Activated CD4-positive, alpha-beta memory T cell treated with anti-CD3 and anti-CD28 coated beads for 36 hours (primary cell): ENCODE measurements at regions of chr11 and their contacts with region 1.

Region 1: GRCh38 chr11:114134870-114135269 is 75.4 kb downstream of the ZBTB16 start:
- DNase-seq: no peak
- H3K4me3 Mint-ChIP-seq: no peak overlapping the region
- H3K27ac Mint-ChIP-seq: no peak overlapping the region
- H3K4me1 Mint-ChIP-seq: peaks cover 33% of the 10 kb centered on the region
- H3K27me3 Mint-ChIP-seq: no peaks in the 10 kb centered on the region

Region 2: DNA sequence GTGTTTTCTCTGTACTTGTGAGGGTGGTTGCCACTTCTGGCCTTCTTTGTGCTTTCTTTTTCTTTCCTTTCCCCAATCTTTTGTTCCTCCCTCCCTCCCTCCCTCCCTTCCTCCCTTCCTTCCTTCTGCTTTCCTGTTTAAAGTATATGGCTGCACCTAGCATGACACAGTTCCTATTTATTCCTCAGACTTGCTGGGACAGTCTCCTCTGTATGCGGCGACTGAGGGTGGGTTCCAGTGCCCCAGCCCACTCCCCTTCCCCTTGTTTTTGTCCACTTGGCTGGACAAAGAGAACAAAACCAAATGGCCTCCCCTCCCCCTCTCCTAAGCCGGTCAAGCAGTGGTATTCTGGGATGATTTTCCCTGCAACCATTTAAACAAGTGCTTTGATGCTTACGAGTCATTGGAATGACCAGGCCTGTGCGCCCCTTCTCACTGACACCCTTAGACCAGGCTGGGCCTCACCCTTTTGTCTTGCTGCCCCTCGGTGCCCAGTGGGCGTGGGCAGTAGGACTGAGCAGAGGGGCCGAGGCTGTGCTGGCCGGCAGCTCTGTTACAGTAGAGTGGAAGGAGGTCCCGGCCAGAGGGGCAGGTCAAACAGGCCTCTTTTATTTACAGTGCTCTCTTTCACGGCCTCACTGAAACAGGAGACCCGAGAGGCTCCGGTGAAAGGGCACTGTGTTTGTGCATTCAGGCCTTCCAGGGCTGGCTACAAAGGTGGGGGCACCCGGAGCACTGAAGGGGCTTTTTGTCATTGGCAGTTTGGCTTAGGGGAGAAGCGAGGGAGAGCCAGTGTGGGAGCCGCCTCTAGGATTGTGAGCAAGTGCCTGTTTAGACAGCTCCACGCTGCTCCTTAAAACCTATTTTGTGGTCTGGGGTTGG is 43.1 kb before region 1 on chr11:
- CTCF ChIA-PET with region 1: no interaction called
- POLR2A ChIA-PET with region 1: no interaction called
- intact Hi-C with region 1: no loop called
- DNase-seq: no peak
- H3K4me3 Mint-ChIP-seq: no peak overlapping the region
- H3K27ac Mint-ChIP-seq: no peak overlapping the region
- H3K4me1 Mint-ChIP-seq: peaks cover 8% of the 10 kb centered on the region
- H3K27me3 Mint-ChIP-seq: no peaks in the 10 kb centered on the region

Region 3: GRCh38 chr11:114166897-114167323 is 32.0 kb after region 1 on chr11:
- CTCF ChIA-PET with region 1: no interaction called
- POLR2A ChIA-PET with region 1: no interaction called
- intact Hi-C with region 1: loop called (anchors 5 kb)
- DNase-seq: no peak
- H3K4me3 Mint-ChIP-seq: peak overlapping the region; percentile 49
- H3K27ac Mint-ChIP-seq: peak overlapping the region; percentile 58
- H3K4me1 Mint-ChIP-seq: peaks cover 77% of the 10 kb centered on the region
- H3K27me3 Mint-ChIP-seq: peaks cover 2% of the 10 kb centered on the region